ENCODE measurements at regions of chr7 and their contacts with region 1.

Region 1: DNA sequence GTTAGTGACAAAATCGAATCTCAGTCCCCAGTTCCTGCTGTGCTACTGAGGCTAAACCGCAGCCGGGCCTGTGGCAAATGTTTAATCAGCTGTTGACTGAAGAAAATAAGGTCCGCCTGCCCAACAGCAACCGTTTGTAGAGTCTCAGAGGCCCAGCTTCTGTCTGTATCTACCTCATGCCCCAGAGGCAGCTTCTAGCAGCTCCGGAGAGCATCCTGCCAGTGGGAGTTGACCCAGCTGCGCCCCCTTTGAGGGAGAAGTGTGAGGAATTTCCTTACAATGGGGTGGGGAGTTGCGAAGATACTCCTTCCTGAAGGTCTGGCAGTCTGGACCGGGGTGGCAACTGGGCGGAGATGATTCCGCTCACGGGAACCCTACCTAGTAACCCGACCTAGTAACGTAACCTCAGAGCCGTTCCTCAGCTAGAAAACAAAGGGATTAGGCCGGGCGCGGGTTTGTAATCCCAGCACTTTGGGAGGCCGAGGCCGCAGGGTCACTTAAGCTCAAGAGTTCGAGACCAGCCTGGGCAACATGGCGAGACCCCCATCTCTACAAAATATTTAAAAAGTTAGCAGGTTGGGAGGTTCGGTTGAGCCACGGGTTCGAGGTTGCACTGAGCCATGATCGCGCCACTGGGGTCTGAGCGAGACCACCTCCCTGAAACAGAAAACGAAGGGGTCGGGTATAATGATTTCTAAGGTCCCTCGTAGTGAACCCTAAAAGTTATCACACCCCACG is 846 bp upstream of the ZNF775 start:
- DNase-seq: peak in 21 of 35 experiments; percentile 8 to 67 (median 28)
- ATAC-seq: no peak
- H3K4me3 ChIP-seq: peak overlapping the region; percentile 74 to 90
- H3K4me3 Mint-ChIP-seq: peak overlapping the region; percentile 80 to 84 (median 80)
- H3K27ac ChIP-seq: peak overlapping the region; percentile 73
- H3K27ac Mint-ChIP-seq: peak overlapping the region; percentile 83 to 86
- H3K4me1 ChIP-seq: peaks cover 9 to 41% of the 10 kb centered on the region in 2 experiments
- H3K4me1 Mint-ChIP-seq: peaks cover 55 to 65% (median 65%) of the 10 kb centered on the region in 3 donors
- H3K27me3 ChIP-seq: no peaks in the 10 kb centered on the region
- H3K27me3 Mint-ChIP-seq: no peaks in the 10 kb centered on the region

Region 2: DNA sequence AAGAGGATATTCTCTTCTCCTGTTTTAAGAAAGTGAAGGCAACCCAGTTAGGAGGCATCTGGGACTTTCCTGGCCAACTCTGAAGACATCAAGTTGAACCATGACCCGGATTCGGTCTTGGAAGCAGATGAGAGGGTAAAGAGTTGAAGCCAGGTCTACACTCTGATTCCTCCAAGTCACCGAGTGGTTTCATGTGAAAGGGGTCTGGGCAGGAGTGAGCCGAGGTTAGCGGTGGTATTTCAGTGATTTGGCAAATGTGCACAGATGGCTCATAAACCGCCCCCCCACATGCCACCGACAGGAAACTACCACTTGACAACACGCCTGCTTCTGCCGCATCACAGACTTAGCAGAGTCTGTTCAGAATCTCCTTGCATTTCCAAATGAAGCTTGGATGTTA is 21.0 kb before region 1 on chr7:
- CTCF ChIA-PET with region 1: interaction called, 5 to 12 read pairs
- POLR2A ChIA-PET with region 1: interaction called in 1 of 2 experiments, 10 read pairs
- DNase-seq: peak; percentile 51 to 83 (median 71)
- ATAC-seq: peak; percentile 92 to 95 (median 94)
- H3K4me3 ChIP-seq: no peak overlapping the region
- H3K4me3 Mint-ChIP-seq: peak overlapping the region; percentile 32 to 67 (median 67)
- H3K27ac ChIP-seq: peak overlapping the region; percentile 71
- H3K27ac Mint-ChIP-seq: peak overlapping the region; percentile 93
- H3K4me1 ChIP-seq: peaks cover 9 to 22% of the 10 kb centered on the region in 2 experiments
- H3K4me1 Mint-ChIP-seq: peaks cover 32 to 52% (median 39%) of the 10 kb centered on the region in 3 donors
- H3K27me3 ChIP-seq: no peaks in the 10 kb centered on the region
- H3K27me3 Mint-ChIP-seq: no peaks in the 10 kb centered on the region